Lower lobe of right lung (tissue), 2 donors: ENCODE measurements at regions of chr3 and their contacts with region 1.

Region 1: GRCh38 chr3:154095832-154096421 is 25.3 kb upstream of the ARHGEF26 start:
- DNase-seq: no peak
- ATAC-seq: peak in 1 of 2 donors; percentile 54
- H3K4me3 ChIP-seq: no peak overlapping the region
- H3K27ac ChIP-seq: no peak overlapping the region
- H3K4me1 ChIP-seq: no peaks in the 10 kb centered on the region
- H3K27me3 ChIP-seq: no peaks in the 10 kb centered on the region
- CTCF ChIP-seq: peak; percentile 40

Region 2: GRCh38 chr3:153889905-153890334 is 206.0 kb before region 1 on chr3:
- intact Hi-C with region 1: no loop called
- DNase-seq: no peak
- ATAC-seq: no peak
- H3K4me3 ChIP-seq: no peak overlapping the region
- H3K27ac ChIP-seq: no peak overlapping the region
- H3K4me1 ChIP-seq: no peaks in the 10 kb centered on the region
- H3K27me3 ChIP-seq: no peaks in the 10 kb centered on the region
- CTCF ChIP-seq: no peak

Region 3: GRCh38 chr3:154252759-154253638 is 157.1 kb after region 1 on chr3:
- intact Hi-C with region 1: loop called (anchors 10 kb)
- DNase-seq: peak; percentile 92
- ATAC-seq: peak; percentile 93 to 95
- H3K4me3 ChIP-seq: no peak overlapping the region
- H3K27ac ChIP-seq: no peak overlapping the region
- H3K4me1 ChIP-seq: no peaks in the 10 kb centered on the region
- H3K27me3 ChIP-seq: no peaks in the 10 kb centered on the region
- CTCF ChIP-seq: peak; percentile 93

Region 4: GRCh38 chr3:154323891-154324738 is 228.2 kb after region 1 on chr3 and contains the start of gene DHX36:
- intact Hi-C with region 1: no loop called
- DNase-seq: peak; percentile 92
- ATAC-seq: peak; percentile 95 to 98
- H3K4me3 ChIP-seq: peak within 1 kb of the TSS; percentile 81
- H3K27ac ChIP-seq: peak within 1 kb of the TSS; percentile 94
- H3K4me1 ChIP-seq: peaks cover 48% of the 10 kb centered on the region
- H3K27me3 ChIP-seq: no peaks in the 10 kb centered on the region
- CTCF ChIP-seq: no peak
- total RNA-seq, gene DHX36: 65.5 TPM

Region 5: GRCh38 chr3:154458560-154458959 is 362.6 kb after region 1 on chr3:
- intact Hi-C with region 1: no loop called
- DNase-seq: no peak
- ATAC-seq: no peak
- H3K4me3 ChIP-seq: no peak overlapping the region
- H3K27ac ChIP-seq: no peak overlapping the region
- H3K4me1 ChIP-seq: no peaks in the 10 kb centered on the region
- H3K27me3 ChIP-seq: no peaks in the 10 kb centered on the region
- CTCF ChIP-seq: no peak